ENCODE measurements at regions of chr15 and their contacts with region 1.

Region 1: GRCh38 chr15:98738689-98739401 is 90.5 kb downstream of the IGF1R start:
- DNase-seq: no peak
- ATAC-seq: no peak
- H3K4me3 ChIP-seq: no peak overlapping the region
- H3K27ac ChIP-seq: no peak overlapping the region
- H3K4me1 ChIP-seq: peaks cover 65% of the 10 kb centered on the region
- CTCF ChIP-seq: no peak
- EP300 ChIP-seq: no peak
- POLR2A ChIP-seq: no peak
- RAD21 ChIP-seq: no peak

Region 2: DNA sequence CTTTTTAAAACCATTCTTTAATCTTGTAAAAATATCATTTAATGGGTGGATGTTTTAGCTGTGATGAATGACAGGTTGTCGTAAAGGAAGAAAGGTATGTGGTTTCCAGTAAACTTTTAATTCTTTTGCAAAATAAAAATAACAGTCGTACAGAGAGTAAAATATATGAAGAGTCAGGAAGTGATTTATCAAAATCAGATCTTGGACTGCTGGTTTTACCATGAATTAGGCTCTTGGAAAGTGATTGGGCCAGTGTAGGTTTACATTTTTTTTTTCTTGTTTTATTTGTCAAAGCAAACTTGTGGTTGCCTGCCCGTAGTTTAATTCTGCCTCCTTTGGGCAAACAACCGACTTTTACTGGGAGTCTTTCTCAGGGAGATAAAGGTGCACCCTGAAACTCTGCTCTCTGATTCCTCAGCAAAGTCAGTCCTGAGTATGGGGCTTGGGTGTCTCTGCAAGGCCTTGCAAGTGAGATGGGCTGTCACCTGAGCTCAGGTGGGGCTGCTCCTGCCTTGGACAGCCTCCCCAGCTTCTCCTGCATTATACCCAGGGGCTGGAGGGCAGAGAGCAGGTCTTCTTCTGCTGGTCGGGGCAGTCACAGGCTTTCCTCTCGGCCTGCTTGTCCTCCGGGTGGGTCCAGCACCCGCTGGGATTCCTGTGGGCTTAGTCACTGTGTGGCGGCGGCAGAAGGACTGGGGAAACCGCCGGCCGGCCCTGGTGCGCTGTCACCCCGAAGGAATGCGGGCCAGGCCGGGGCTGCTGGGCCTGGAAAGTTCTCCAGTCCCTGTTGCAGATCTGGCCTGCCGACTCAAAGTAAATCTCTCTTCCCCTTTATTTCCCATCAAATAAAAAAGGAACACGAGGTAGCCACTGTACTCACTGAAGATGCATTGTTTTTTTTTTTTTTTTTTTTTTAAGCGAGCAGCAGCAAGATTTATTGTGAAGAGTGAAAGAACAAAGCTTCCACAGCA is 11.4 kb before region 1 on chr15:
- CTCF ChIA-PET with region 1: interaction called, 16 read pairs
- POLR2A ChIA-PET with region 1: no interaction called
- DNase-seq: peak; percentile 93 to 98
- ATAC-seq: peak; percentile 96 to 98
- H3K4me3 ChIP-seq: peak overlapping the region; percentile 17; the same call in 2 of the 3 replicates
- H3K27ac ChIP-seq: peak overlapping the region; percentile 87 to 92
- H3K4me1 ChIP-seq: peaks cover 97% of the 10 kb centered on the region
- CTCF ChIP-seq: no peak
- EP300 ChIP-seq: peak in 1 of 2 experiments; percentile 43; a peak in 1 of 5 replicates
- POLR2A ChIP-seq: peak; percentile 21; the same call in 1 of the 2 replicates
- RAD21 ChIP-seq: 0 out of 5 replicates have a peak, but pooled peaks of 1 of the 2 experiments have one; percentile 11

Measured in A549 (cell line).